ENCODE measurements at regions of chr17 and their contacts with region 1.

Region 1: DNA sequence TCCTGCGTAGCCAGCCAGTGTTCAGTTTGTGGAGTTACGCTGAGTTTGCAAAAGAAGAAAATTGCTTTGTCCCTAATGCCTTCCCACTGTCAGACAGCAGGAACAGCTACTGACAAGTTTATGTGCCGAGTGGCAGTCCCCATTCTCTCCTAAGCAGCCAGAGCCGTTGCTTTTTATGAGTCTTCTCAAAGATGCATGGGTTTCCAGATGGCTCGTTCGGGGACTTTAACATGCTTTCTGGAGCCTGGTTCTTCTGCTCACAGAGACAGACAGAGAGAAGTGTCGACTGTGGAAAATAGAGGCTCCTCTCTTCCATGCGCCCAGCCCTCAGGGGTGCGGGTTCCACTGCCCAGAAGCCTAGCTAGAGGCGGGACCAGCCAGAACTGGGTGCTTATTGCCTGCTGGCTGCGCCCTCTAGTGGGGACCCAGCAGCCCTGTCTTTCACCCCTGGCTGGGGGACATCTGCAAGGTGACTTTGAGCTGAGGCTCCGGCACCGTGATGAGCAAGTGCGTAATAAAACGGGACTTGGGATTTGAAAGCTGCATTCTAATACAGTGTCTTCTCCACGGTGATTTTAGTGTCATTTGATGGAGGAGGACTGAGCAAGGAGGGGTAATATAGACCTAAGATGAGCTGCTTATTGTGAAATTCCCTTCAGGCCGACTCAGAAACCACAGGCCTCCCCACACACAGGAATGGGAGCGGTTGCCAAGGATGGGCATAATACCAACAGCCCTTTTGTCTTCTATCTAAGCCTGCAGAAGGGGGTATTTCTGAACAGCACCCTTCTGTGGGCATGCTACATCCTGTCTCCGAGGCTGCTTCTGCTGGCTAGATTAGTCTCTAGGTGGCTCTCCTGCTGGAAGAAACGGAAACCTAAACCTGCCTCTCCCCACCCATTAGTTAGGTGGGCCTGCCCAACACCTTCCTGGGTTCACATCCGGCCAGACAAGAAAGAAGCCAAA is 73.1 kb downstream of the CCDC182 start:
- DNase-seq: peak; percentile 94
- H3K4me3 ChIP-seq: peak overlapping the region in 1 of 2 experiments; percentile 9; a peak in 1 of 4 replicates
- H3K27ac ChIP-seq: peak overlapping the region; percentile 5 to 100; a peak in 3 of 4 replicates
- H3K4me1 ChIP-seq: peaks cover 11 to 74% of the 10 kb centered on the region in 2 experiments; a peak in 3 of 4 replicates
- H3K27me3 ChIP-seq: no peaks in the 10 kb centered on the region
- CTCF ChIP-seq: peak; percentile 100
- EP300 ChIP-seq: peak; percentile 32 to 73; a peak in 3 of 4 replicates
- RAD21 ChIP-seq: peak; percentile 95

Region 2: DNA sequence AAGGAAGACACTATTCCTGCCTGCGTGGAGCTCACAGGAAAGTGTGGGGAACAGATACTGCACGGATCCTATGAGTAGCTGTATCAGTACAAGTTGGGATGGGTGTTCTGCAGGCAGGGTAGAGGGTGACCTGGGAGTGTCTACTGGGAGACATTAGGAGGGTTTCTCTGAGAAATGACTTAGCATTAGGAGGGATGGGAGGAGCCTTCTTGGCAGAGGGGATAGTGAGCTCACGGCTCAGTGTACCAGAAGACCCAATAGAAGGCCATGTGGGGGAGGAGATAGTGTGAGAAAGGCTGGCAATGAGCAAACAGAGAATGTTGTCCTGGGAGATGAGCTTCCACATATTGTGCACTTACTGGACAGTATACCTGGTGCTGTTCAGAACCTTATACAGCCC is 306.5 kb before region 1 on chr17:
- CTCF ChIA-PET with region 1: interaction called, 11 read pairs
- POLR2A ChIA-PET with region 1: no interaction called
- DNase-seq: no peak
- H3K4me3 ChIP-seq: no peak overlapping the region
- H3K27ac ChIP-seq: peak overlapping the region in 1 of 2 experiments; percentile 92; a peak in 2 of 4 replicates
- H3K4me1 ChIP-seq: peaks cover 0 to 56% of the 10 kb centered on the region in 2 experiments; a peak in 3 of 4 replicates
- H3K27me3 ChIP-seq: no peaks in the 10 kb centered on the region
- CTCF ChIP-seq: no peak
- EP300 ChIP-seq: no peak
- RAD21 ChIP-seq: no peak

Region 3: DNA sequence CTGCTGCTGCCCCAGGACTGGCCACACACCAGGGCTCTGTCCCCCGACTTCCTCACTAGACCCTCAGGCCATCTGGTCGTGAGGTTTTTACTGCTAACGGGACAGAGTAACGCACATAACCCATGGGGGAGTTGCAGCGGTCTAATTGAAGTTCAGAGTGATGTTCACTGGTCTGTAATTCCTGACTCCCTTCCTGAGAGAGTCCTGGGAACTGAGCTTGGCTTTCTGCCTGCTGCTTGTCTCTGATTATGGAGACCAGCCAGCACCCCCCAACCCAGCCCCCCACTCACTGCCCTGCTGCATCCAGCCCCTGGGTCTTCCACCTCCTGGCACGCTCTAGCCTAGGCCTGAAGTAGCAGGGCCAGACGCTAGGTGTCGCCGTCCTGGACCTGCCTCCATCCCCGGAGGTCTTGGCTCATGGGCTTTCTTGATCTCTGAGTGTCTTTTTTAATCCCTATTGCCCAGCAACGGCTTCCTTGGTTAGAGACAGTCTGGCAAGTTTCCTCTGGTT is 119.8 kb before region 1 on chr17:
- CTCF ChIA-PET with region 1: interaction called, 39 read pairs
- POLR2A ChIA-PET with region 1: interaction called, 3 read pairs
- DNase-seq: peak; percentile 84
- H3K4me3 ChIP-seq: no peak overlapping the region
- H3K27ac ChIP-seq: peak overlapping the region in 1 of 2 experiments; percentile 99; a peak in 2 of 4 replicates
- H3K4me1 ChIP-seq: peaks cover 6 to 86% of the 10 kb centered on the region in 2 experiments; a peak in 2 of 4 replicates
- H3K27me3 ChIP-seq: no peaks in the 10 kb centered on the region
- CTCF ChIP-seq: peak; percentile 52
- EP300 ChIP-seq: peak in 1 of 2 experiments; percentile 61; a peak in 1 of 4 replicates
- RAD21 ChIP-seq: peak; percentile 65

Region 4: GRCh38 chr17:57622683-57623433 is 49.1 kb before region 1 on chr17:
- CTCF ChIA-PET with region 1: interaction called, 100 read pairs
- POLR2A ChIA-PET with region 1: interaction called, 44 read pairs
- DNase-seq: peak; percentile 82
- H3K4me3 ChIP-seq: no peak overlapping the region
- H3K27ac ChIP-seq: peak overlapping the region; percentile 87 to 100
- H3K4me1 ChIP-seq: peaks cover 53 to 84% of the 10 kb centered on the region in 2 experiments
- H3K27me3 ChIP-seq: no peaks in the 10 kb centered on the region
- CTCF ChIP-seq: no peak
- EP300 ChIP-seq: peak; percentile 71 to 97; a peak in 3 of 4 replicates
- RAD21 ChIP-seq: peak; percentile 46

Region 5: DNA sequence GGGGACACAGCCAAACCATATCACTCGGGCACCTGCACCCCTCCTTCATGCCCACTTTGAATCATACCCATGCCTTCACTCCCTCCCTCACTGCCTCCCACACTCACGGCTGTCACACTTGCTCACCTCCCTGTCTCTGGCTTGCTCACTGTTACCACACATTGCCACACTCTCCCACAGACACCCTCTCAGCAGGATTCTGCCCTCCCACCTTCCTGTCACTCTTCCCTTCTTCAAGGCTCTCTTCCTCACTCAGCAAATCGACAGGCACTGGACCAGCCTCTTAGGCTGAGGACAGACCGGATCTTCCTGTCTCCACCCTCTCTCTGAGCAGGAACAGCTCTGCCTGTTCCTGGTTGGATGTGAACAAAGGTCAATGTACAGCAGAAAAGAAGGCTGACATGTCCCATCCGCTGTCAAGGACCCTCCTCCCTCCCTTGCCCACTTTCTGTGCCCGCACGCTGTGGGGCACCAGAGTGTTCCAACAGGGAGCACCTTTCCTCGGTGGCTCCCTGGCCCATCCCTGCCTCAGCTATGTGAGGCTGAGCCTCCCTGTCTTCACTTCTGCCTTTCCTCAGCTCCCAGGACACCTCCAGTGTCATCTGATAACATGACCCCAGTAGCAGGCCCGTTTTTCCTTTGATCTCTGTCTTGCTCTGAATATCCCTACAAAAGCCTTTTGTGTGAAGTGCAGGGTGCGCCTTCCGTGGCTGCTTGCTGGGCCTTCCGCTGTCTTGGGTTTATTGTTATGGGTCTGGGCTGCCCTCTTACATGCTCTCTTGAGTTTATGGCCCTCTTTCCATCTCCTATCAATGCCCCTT is 26.2 kb after region 1 on chr17:
- CTCF ChIA-PET with region 1: interaction called, 14 read pairs
- POLR2A ChIA-PET with region 1: no interaction called
- DNase-seq: no peak
- H3K4me3 ChIP-seq: no peak overlapping the region
- H3K27ac ChIP-seq: no peak overlapping the region; a peak in 1 of 4 replicates
- H3K4me1 ChIP-seq: peaks cover 0 to 22% of the 10 kb centered on the region in 2 experiments; a peak in 2 of 4 replicates
- H3K27me3 ChIP-seq: no peaks in the 10 kb centered on the region
- CTCF ChIP-seq: no peak
- EP300 ChIP-seq: no peak
- RAD21 ChIP-seq: no peak

Region 6: DNA sequence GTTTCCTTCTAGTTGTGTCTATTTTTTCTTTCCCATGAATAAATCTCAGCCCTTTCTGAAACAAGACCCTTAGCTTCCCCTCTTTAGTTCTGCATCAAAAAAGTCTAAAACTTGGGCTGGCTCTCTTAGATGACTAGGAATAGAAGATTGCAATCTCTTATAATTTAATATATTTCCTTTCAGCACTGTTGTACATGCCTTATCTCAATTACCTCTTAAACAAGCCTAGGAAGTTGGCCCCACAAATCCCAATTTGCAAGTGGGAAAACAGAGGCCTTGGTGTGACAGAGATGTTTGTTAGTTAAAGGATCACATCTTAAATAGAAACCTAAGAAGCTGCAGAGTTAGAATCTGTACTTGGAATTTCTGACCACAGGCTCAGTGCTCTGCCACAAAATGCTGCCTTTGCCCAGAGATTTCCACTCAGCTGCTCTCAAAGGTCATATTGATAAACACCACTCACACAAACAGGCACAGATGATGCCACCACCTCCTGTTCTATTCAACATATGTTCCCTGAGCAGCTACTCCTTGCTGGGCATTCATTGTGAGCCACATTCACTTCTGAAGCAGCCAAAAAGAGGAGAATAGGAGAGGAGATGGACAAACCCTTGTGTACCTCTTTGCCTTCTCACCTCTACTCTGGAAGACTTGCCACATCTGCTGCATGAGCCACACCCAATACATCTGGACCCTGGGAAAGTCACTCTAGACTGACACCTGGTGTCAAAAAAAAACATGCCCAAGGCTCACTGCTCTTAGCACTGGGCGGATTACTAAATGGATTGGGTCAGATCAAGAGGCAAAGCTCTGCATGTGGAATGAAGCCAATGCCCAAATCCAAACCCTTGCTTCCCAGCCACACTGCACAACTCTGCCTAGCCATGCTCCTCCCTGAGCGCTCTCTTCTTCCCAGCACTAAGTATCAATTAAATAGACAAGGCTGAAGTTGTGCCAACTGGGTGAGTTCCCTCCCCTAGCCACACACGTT is 67.7 kb after region 1 on chr17:
- CTCF ChIA-PET with region 1: interaction called, 29 read pairs
- POLR2A ChIA-PET with region 1: interaction called, 3 read pairs
- DNase-seq: peak; percentile 76
- H3K4me3 ChIP-seq: no peak overlapping the region
- H3K27ac ChIP-seq: peak overlapping the region in 1 of 2 experiments; percentile 96; a peak in 3 of 4 replicates
- H3K4me1 ChIP-seq: peaks cover 0 to 17% of the 10 kb centered on the region in 2 experiments; a peak in 2 of 4 replicates
- H3K27me3 ChIP-seq: peaks cover 12% of the 10 kb centered on the region
- CTCF ChIP-seq: peak; percentile 45
- EP300 ChIP-seq: peak in 1 of 2 experiments; percentile 81; a peak in 2 of 4 replicates
- RAD21 ChIP-seq: peak; percentile 65